Activated naive CD8-positive, alpha-beta T cell treated with anti-CD3 and anti-CD28 coated beads, Interleukin-2, amount 10 ng/mL, durations not matched to agents 7 days and 5 days (primary cell): ENCODE measurements at regions of chr1 and their contacts with region 1.

Region 1: GRCh38 chr1:153946622-153947241 is at the start of gene DENND4B:
- DNase-seq: no peak
- ATAC-seq: peak; percentile 58
- H3K4me3 Mint-ChIP-seq: peak within 1 kb of the TSS; percentile 95
- H3K27ac Mint-ChIP-seq: peak within 1 kb of the TSS; percentile 96
- H3K4me1 Mint-ChIP-seq: peaks cover 32% of the 10 kb centered on the region
- H3K27me3 Mint-ChIP-seq: no peaks in the 10 kb centered on the region
- total RNA-seq, gene DENND4B: 173 to 183 TPM

Region 2: DNA sequence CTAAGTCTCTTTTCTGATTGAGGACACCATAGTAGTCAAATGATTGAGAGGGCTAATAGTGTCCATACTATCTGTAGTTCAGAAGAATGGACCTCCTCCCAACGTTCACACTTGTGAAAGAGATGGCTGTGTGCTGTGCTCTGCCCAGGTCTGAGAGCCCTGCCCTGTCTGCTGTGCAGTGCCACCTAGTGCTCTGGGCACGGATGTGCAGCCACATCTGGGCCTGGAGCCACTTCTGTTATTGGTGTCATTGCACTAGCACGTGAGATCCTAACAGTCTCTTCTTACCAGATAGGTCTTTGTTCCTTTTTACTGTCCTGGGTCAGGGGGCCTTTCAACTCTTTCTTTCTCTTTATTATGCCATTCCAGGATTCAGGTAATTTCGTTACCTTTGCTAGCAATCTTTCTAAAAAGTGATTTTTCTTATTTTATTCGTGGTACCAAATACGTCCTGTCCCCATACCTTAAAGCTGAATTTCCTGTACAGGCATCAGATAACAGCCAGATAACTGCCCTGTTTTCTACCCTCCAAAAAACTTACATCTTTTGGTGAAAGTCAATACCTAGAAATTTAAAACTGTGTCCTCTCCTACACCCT is 197.2 kb before region 1 on chr1:
- POLR2A ChIA-PET with region 1: no interaction called
- DNase-seq: peak; percentile 76
- ATAC-seq: peak; percentile 99
- H3K4me3 Mint-ChIP-seq: no peak overlapping the region
- H3K27ac Mint-ChIP-seq: peak overlapping the region; percentile 6
- H3K4me1 Mint-ChIP-seq: peaks cover 6% of the 10 kb centered on the region
- H3K27me3 Mint-ChIP-seq: no peaks in the 10 kb centered on the region

Region 3: DNA sequence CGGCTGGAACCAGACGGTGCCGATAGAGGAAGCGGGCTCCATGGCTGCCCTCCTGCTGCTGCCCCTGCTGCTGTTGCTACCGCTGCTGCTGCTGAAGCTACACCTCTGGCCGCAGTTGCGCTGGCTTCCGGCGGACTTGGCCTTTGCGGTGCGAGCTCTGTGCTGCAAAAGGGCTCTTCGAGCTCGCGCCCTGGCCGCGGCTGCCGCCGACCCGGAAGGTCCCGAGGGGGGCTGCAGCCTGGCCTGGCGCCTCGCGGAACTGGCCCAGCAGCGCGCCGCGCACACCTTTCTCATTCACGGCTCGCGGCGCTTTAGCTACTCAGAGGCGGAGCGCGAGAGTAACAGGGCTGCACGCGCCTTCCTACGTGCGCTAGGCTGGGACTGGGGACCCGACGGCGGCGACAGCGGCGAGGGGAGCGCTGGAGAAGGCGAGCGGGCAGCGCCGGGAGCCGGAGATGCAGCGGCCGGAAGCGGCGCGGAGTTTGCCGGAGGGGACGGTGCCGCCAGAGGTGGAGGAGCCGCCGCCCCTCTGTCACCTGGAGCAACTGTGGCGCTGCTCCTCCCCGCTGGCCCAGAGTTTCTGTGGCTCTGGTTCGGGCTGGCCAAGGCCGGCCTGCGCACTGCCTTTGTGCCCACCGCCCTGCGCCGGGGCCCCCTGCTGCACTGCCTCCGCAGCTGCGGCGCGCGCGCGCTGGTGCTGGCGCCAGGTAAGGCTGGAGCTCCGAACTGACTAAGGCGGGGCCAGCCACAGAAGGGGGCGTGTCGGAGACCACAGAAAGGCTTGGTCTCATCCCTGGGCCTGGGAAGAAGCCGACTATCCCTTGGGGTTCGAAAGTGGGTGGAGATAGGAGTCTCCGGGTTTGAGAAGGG is 171.0 kb before region 1 on chr1:
- POLR2A ChIA-PET with region 1: interaction called, 14 read pairs
- DNase-seq: peak; percentile 81
- ATAC-seq: peak; percentile 69
- H3K4me3 Mint-ChIP-seq: peak overlapping the region; percentile 94
- H3K27ac Mint-ChIP-seq: peak overlapping the region; percentile 92
- H3K4me1 Mint-ChIP-seq: peaks cover 33% of the 10 kb centered on the region
- H3K27me3 Mint-ChIP-seq: no peaks in the 10 kb centered on the region

Region 4: GRCh38 chr1:153922972-153923925 is 23.5 kb before region 1 on chr1 and contains the start of gene GATAD2B:
- POLR2A ChIA-PET with region 1: interaction called, 101 read pairs
- DNase-seq: peak; percentile 96
- ATAC-seq: peak; percentile 94
- H3K4me3 Mint-ChIP-seq: peak within 1 kb of the TSS; percentile 95
- H3K27ac Mint-ChIP-seq: peak within 1 kb of the TSS; percentile 98
- H3K4me1 Mint-ChIP-seq: peaks cover 36% of the 10 kb centered on the region
- H3K27me3 Mint-ChIP-seq: no peaks in the 10 kb centered on the region
- total RNA-seq, gene GATAD2B: 86.3 to 96.7 TPM

Region 5: GRCh38 chr1:153958111-153958960 is 11.6 kb after region 1 on chr1 and contains the start of gene CRTC2:
- POLR2A ChIA-PET with region 1: interaction called, 87 read pairs
- DNase-seq: peak; percentile 94
- ATAC-seq: peak; percentile 86
- H3K4me3 Mint-ChIP-seq: peak within 1 kb of the TSS; percentile 94
- H3K27ac Mint-ChIP-seq: peak within 1 kb of the TSS; percentile 98
- H3K4me1 Mint-ChIP-seq: peaks cover 45% of the 10 kb centered on the region
- H3K27me3 Mint-ChIP-seq: no peaks in the 10 kb centered on the region
- total RNA-seq, gene CRTC2: 104 to 115 TPM

Region 6: DNA sequence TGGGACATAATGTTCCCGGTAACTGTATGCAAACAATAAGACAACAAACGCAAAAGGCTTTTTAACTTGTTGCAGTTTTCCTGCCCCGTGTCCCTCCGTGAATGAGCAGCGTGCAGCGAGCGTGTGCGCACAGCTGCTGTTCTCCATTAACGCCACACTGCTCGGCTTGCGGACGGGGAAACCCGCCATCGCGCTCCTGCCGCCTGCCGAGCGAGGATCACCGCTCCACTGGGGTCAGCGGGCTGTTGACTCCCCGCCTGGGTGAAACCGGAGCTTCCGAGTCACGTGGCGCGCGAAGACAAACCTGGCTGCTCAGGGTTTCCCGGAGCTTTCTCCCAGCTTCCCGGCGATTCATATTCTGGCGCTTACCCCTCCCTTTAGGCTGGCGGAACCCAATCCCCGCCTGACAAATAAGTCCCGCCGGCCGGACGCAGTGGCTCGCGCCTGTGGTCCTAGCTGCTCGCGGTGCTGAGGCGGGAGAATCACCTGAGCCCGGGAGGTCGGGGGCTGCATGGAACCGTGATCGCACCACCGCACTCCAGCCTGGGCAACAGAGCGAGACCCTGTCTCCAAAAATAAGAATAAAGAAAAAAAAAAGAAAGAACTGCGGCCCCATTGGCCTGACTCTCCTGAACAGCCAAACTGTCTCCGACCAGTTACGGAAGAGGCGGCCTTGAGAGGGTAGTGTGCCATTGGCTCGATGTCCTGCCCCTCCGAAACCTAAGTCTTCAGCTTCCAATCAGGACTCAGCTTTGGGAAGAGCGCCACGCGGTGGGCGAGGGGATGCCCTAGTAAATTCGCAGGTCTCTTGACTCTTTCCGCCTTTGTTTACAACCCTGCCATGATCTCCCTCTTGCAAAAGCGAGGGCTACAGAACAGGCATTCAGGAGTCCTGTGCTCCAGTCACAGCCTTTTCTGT is 20.6 kb after region 1 on chr1 and contains the start of gene CREB3L4:
- POLR2A ChIA-PET with region 1: interaction called, 47 read pairs
- DNase-seq: peak; percentile 80
- ATAC-seq: peak; percentile 87
- H3K4me3 Mint-ChIP-seq: peak within 1 kb of the TSS; percentile 96
- H3K27ac Mint-ChIP-seq: peak within 1 kb of the TSS; percentile 95
- H3K4me1 Mint-ChIP-seq: peaks cover 51% of the 10 kb centered on the region
- H3K27me3 Mint-ChIP-seq: no peaks in the 10 kb centered on the region
- total RNA-seq, gene CREB3L4: 8.2 to 10.0 TPM

Region 7: DNA sequence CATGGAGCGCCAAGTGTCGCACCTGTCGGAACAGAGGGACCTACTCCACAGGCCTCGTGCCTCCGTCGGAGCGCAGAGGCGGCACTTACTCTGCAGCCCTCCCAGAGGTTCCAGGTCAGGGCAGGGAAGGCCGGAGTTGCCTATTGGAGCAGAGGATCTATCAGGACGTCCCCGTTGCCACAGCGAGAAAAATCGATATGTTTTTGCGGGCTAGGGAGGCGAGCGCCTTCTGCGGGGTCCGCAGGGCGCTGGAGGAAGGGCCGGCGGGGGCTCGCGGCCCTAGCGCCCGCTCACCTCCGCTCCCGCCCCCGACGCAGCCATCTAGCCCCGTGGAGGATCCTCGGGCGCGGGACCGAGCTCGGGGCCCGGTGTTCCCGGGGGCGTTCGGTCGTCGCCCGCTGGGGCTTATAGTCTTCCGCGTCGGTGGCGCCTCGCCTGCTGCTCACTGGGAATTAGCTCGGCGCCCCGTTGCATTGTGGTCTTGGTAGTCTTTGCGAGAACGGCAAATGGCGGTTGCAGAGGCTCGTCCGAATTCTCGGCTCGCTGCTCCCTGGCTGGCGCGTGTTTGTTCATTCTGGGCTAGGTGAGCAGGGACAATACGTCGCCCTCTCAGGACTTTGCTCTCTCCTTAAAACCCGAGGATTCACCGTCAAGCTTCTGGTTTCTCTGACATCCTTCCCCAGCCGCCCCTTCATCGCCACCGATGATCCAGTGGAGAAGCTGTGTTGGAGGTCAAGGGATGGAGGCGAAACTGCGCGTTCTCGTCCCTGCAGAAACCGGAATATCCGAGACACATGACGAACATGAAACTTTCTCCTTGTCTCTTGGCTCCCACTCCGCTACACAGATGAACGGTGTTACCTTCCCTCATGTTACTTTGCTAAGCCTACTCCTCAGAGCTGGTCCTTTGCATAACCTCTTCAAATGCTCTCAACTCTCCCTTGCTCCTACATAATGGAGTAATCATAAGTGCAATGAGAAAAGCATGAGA is 30.8 kb after region 1 on chr1 and contains the start of gene JTB:
- POLR2A ChIA-PET with region 1: interaction called, 28 read pairs
- DNase-seq: peak; percentile 80
- ATAC-seq: peak; percentile 93
- H3K4me3 Mint-ChIP-seq: peak within 1 kb of the TSS; percentile 97
- H3K27ac Mint-ChIP-seq: peak within 1 kb of the TSS; percentile 93
- H3K4me1 Mint-ChIP-seq: peaks cover 42% of the 10 kb centered on the region
- H3K27me3 Mint-ChIP-seq: no peaks in the 10 kb centered on the region
- total RNA-seq, gene JTB: 118 TPM

Region 8: DNA sequence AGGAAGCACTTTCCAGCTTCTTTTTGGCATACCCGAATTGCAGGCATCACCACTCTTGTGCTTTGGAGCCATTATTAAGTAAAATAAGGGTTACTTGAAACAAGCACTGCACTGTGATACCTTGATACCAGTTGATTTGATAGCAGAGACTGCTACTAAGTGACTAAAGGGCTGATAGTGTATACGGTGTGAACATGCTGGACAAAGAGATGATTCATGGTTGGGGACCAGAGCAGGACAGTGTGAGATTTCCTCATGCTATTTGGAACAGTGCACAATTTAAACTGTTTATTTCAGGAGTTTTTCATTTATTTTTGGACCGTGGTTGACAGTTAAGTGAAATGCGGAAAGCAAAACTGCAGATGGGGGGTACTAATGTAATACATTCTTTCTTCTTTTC is 53.7 kb after region 1 on chr1:
- POLR2A ChIA-PET with region 1: no interaction called
- DNase-seq: no peak
- ATAC-seq: no peak
- H3K4me3 Mint-ChIP-seq: no peak overlapping the region
- H3K27ac Mint-ChIP-seq: no peak overlapping the region
- H3K4me1 Mint-ChIP-seq: peaks cover under 1% of the 10 kb centered on the region
- H3K27me3 Mint-ChIP-seq: no peaks in the 10 kb centered on the region